ENCODE measurements at regions of chr12 and their contacts with region 1.

Region 1: DNA sequence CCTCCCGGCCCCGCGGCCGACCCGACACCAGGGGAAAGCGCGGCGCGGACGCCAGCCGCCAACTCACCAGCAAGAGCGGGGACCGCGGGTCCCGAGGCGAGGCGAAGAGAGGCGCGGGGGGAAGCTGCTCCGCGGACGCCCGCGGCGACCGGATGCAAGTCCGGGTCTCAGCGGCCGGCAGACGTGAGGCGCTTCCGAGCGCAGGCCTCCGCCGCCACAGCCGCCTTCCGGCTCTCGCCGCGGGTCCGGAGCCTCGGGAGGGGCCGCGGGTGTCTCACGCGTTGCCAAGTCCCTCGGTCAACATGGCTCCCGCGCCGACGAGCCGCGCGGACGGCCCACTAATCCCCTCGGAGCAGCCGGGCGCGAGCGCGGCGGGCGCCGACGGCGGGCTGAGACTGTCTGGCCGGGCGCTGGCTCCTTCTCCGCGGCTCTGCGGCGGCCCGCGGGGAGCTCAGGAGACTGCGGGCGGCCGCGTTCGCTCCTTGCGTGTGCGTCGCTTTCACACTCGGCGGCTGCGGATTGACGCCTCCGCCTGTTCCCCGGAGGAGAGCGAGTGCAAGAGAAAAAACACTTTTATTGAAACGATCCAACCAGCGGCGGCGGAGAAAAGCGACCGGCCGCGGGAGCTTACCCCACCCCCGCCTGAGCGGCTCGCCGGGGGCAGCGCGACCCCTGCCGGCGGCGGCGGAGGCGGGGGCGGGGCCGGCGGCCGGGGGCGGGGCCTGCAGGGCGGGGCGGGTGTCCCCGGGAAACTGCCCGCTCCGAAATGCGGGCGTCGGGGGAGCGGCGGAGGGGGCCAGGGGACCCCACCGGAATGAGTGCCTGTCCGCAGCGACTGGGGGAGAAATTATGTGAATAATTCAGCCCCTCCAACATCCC is at the start of gene CDK17:
- DNase-seq: peak; percentile 96
- H3K4me3 Mint-ChIP-seq: peak within 1 kb of the TSS; percentile 92
- H3K27ac Mint-ChIP-seq: peak within 1 kb of the TSS; percentile 97
- H3K4me1 Mint-ChIP-seq: peaks cover 45% of the 10 kb centered on the region
- H3K27me3 Mint-ChIP-seq: no peaks in the 10 kb centered on the region
- total RNA-seq, gene CDK17: 28.0 and 30.5 TPM in 2 replicates

Region 2: DNA sequence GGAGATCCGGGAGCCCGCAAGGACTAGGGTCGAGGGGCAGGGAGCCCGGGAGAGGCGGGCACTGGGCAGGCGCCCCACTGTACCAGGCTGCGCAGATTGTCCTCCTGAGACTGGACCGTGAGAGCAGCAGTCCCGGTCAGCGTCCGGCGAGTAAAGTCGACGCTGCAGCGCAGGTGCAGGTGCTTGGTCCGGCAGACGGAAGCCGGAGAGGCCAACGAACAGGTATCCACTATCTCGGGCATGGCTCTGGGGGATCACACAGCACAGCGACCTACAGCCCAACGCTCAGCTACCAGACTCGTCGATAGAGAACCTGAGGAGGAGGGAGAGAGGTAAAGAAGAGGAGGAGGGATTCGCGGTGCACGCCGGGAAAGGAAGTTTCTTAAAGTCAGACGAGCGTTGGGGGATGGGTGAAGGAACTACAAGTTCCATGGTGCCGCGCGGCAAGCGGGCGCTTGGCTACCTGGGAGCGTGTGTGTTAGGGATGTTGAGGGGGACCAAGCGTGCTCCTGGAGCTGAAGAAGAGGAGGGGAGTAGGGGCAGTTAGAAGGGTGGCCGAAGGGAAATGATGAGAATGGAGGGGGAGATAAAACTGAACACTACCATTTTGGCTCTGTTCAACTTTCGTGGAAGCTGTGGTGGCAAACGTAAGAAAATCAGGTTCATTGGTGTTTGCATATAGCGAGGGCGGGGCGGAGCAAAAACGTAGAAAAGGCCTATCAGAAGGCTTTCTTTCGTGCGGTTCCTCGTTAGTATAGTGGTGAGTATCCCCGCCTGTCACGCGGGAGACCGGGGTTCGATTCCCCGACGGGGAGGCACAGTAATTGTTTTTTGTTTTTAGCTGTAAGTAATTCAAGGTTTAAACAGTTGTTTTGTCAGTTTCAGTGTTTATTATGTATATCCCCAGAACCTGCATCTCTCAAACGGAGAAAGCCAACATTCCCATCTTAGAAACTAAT is 364.6 kb before region 1 on chr12 and contains the start of gene LTA4H:
- intact Hi-C with region 1: loop called (anchors 1 kb)
- DNase-seq: peak; percentile 98
- H3K4me3 Mint-ChIP-seq: no peak within 1 kb of the TSS
- H3K27ac Mint-ChIP-seq: no peak within 1 kb of the TSS
- H3K4me1 Mint-ChIP-seq: peaks cover 6% of the 10 kb centered on the region
- H3K27me3 Mint-ChIP-seq: no peaks in the 10 kb centered on the region
- total RNA-seq, gene LTA4H: 63.4 and 64.1 TPM in 2 replicates

Region 3: GRCh38 chr12:96194971-96195844 is 204.9 kb before region 1 on chr12:
- intact Hi-C with region 1: loop called (anchors 2 kb)
- DNase-seq: peak; percentile 91
- H3K4me3 Mint-ChIP-seq: peak overlapping the region; percentile 94
- H3K27ac Mint-ChIP-seq: peak overlapping the region; percentile 97
- H3K4me1 Mint-ChIP-seq: peaks cover 41% of the 10 kb centered on the region
- H3K27me3 Mint-ChIP-seq: no peaks in the 10 kb centered on the region

Region 4: DNA sequence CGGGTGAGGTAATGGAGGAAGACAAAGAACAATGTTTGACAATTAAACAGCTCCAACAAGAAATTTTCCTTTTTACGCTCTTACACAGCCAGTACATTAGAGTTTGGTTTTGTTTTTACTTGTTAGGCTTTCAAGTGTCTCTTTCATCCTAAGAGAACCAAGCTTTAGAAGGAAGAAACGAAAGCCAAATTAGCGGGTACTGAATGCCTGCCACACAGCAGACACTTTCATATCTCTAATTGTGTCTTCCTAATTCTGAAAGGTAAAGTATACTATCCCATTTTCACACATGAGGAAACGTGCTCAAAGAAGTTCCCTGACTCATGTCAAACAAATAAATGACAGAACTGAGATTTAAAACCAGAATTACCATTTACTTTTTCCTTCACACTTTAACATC is 64.9 kb before region 1 on chr12:
- intact Hi-C with region 1: loop called (anchors 1 kb)
- DNase-seq: no peak
- H3K4me3 Mint-ChIP-seq: peak overlapping the region; percentile 51
- H3K27ac Mint-ChIP-seq: peak overlapping the region; percentile 12
- H3K4me1 Mint-ChIP-seq: peaks cover 29% of the 10 kb centered on the region
- H3K27me3 Mint-ChIP-seq: no peaks in the 10 kb centered on the region

Region 5: GRCh38 chr12:96375841-96376604 is 24.1 kb before region 1 on chr12:
- intact Hi-C with region 1: loop called (anchors 2 kb)
- DNase-seq: no peak
- H3K4me3 Mint-ChIP-seq: peak overlapping the region; percentile 2
- H3K27ac Mint-ChIP-seq: peak overlapping the region; percentile 26
- H3K4me1 Mint-ChIP-seq: peaks cover 52% of the 10 kb centered on the region
- H3K27me3 Mint-ChIP-seq: no peaks in the 10 kb centered on the region

Region 6: DNA sequence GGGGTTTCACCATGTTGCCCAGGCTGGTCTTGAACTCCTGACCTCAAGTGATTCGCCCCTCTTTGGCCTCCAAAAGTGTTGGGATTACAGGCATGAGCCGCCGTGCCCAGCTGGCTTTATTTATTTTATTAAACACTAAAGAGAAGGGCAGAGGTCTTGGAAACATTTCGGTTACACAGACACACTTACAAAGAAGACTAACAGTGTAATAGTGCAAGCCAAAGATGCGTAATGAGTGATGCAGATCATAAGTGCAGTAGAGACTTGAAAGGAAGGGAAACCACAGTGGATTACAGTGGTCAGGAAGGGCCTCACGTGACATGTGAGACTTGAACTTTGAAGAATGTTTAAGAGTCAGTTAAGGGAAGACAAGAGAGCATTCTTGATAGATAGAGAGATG is 33.9 kb after region 1 on chr12:
- intact Hi-C with region 1: no loop called
- DNase-seq: peak; percentile 93
- H3K4me3 Mint-ChIP-seq: peak overlapping the region; percentile 48
- H3K27ac Mint-ChIP-seq: peak overlapping the region; percentile 62
- H3K4me1 Mint-ChIP-seq: peaks cover 31% of the 10 kb centered on the region
- H3K27me3 Mint-ChIP-seq: no peaks in the 10 kb centered on the region

Region 7: DNA sequence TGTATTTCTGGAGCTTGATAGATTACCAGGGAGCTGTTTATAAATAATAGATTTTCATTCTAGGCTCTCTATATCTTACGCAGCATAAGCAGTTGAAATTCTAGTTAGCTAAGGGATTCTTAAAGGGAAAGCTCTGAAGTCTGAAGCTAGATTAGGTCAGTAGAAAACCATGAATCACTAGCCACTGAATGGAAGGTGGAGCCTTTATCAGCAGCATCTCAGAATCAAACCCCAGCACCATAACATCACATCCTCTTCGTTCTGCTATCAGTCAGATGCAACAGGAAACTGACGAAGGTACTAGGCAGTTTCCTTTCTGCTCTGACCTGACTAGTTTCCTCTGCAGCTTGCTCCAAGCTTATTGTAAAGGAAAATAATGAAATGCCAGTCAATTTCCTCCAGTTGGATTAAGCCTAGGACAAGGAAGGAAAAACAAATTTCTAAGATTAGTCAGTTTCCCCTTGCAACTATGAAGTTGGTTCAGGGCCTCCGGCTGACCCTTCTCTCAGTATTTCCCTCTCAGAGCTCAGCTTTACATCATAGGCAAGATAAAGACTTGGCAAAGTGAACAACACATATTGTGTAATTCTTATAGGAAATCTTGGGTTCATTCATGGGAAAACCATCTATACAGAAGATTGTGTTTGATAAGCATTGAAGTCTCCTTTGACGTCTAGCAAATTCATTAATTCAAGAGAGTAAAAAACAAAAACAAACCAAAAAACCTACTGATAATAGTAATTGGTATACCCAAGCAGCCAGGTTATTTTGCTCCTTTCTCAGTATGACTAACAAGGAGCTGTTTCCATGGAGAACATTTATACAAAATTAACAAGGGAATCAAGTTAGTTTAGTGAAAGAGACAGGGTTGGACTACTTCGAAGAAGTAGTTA is 45.8 kb after region 1 on chr12:
- intact Hi-C with region 1: loop called (anchors 1 kb)
- DNase-seq: peak; percentile 90
- H3K4me3 Mint-ChIP-seq: peak overlapping the region; percentile 70
- H3K27ac Mint-ChIP-seq: peak overlapping the region; percentile 87
- H3K4me1 Mint-ChIP-seq: peaks cover 40% of the 10 kb centered on the region
- H3K27me3 Mint-ChIP-seq: no peaks in the 10 kb centered on the region

Region 8: DNA sequence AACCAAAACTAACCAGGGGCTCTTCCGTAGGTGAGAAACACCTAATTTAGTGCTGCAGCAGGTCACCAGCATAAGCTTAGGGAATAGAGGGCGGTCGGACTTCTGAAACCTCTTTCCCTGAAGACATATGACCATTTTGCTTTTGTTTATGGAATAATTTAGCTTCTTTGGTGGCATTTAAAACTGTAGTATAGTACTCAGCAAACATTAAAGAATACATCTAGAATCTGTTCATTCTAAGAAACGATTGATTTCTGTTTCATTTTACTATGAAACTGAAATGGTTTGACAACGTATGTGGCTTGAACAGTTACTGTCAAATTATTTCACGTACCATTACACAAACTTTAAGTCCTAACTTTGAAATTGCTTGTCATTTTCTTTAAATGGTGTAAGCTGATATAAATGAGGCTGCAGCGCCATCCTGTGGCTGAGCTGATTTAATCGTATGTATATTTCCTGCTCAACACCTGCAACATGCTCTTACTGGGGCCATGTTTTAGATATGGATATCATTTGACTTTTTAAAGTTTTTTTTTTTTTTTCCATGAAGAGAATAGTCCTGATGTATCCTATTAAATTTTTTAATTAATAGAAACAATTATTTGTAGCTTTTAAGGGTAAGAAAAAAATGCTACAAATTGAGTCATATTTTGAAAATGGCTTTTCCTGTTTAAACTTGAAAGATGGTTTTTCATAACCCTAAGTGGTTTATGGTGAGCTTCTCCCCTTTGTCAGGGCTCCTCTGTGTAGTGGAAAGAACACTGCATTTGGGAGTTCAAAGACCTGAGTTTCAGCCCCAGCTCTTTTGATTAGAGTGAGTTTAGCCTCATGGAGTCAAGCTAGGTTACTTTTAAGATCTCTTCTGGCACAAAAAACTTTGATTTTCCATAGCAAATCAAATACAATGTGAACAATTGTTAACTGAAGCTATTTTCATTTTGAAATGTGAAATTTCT is 116.6 kb after region 1 on chr12:
- intact Hi-C with region 1: loop called (anchors 1 kb)
- DNase-seq: peak; percentile 95
- H3K4me3 Mint-ChIP-seq: peak overlapping the region; percentile 52
- H3K27ac Mint-ChIP-seq: peak overlapping the region; percentile 68
- H3K4me1 Mint-ChIP-seq: peaks cover 14% of the 10 kb centered on the region
- H3K27me3 Mint-ChIP-seq: no peaks in the 10 kb centered on the region